Activated CD4-positive, alpha-beta memory T cell treated with anti-CD3 and anti-CD28 coated beads for 36 hours (primary cell): ENCODE measurements at regions of chr12 and their contacts with region 1.

Region 1: GRCh38 chr12:24705741-24706358 is 243.1 kb downstream of the BCAT1 start:
- DNase-seq: peak; percentile 38
- H3K4me3 Mint-ChIP-seq: peak overlapping the region; percentile 6
- H3K27ac Mint-ChIP-seq: peak overlapping the region; percentile 73
- H3K4me1 Mint-ChIP-seq: peaks cover 21% of the 10 kb centered on the region
- H3K27me3 Mint-ChIP-seq: peaks cover 3% of the 10 kb centered on the region

Region 2: DNA sequence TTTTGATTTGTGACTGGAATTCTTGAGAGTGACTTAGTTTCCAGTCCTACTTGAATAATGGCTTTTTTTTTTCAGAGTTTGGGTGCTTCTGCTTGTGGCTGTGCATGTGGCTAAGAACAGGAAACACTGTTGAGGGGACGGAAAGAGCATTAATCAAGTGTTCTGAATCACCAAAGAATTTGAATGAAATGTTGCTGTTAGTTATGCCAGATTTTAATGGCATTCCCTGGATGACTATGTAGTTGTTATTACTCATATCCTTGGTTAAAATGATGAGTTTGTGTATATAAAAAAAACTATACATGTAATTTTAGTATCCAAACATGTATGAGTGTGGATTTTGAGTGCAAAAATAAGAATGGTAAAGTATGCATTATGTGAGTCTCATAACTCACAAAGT is 104.9 kb before region 1 on chr12:
- CTCF ChIA-PET with region 1: no interaction called
- POLR2A ChIA-PET with region 1: no interaction called
- intact Hi-C with region 1: loop called (anchors 1 kb)
- DNase-seq: no peak
- H3K4me3 Mint-ChIP-seq: no peak overlapping the region
- H3K27ac Mint-ChIP-seq: peak overlapping the region; percentile 42
- H3K4me1 Mint-ChIP-seq: peaks cover 5% of the 10 kb centered on the region
- H3K27me3 Mint-ChIP-seq: peaks cover 5% of the 10 kb centered on the region

Region 3: GRCh38 chr12:24630446-24630845 is 75.4 kb before region 1 on chr12:
- CTCF ChIA-PET with region 1: no interaction called
- POLR2A ChIA-PET with region 1: no interaction called
- intact Hi-C with region 1: no loop called
- DNase-seq: no peak
- H3K4me3 Mint-ChIP-seq: no peak overlapping the region
- H3K27ac Mint-ChIP-seq: no peak overlapping the region
- H3K4me1 Mint-ChIP-seq: no peaks in the 10 kb centered on the region
- H3K27me3 Mint-ChIP-seq: no peaks in the 10 kb centered on the region

Region 4: DNA sequence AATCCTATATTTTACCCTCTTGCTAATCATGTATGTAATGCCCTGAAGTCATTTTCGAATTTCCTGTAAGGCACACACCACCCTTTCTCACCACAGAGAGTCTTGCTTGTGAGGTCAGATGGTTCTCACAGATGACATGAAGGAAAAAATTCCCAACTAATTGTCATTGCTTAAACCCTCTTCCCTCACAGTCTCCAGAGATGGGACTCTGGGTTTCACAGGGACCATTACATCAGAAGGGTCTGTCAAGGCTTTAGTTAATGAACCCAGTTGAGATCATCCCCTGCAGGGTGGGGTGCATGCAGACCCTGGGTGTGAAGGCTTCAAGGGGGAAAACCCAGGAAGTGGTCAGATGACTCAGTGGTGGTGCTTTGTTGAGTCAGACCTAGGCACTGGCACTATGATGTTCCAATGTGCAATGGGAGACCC is 13.5 kb after region 1 on chr12:
- CTCF ChIA-PET with region 1: interaction called, 4 read pairs
- POLR2A ChIA-PET with region 1: interaction called, 13 read pairs
- intact Hi-C with region 1: loop called (anchors 1 kb)
- DNase-seq: peak; percentile 79
- H3K4me3 Mint-ChIP-seq: no peak overlapping the region
- H3K27ac Mint-ChIP-seq: peak overlapping the region; percentile 84
- H3K4me1 Mint-ChIP-seq: peaks cover 31% of the 10 kb centered on the region
- H3K27me3 Mint-ChIP-seq: peaks cover 7% of the 10 kb centered on the region

Region 5: DNA sequence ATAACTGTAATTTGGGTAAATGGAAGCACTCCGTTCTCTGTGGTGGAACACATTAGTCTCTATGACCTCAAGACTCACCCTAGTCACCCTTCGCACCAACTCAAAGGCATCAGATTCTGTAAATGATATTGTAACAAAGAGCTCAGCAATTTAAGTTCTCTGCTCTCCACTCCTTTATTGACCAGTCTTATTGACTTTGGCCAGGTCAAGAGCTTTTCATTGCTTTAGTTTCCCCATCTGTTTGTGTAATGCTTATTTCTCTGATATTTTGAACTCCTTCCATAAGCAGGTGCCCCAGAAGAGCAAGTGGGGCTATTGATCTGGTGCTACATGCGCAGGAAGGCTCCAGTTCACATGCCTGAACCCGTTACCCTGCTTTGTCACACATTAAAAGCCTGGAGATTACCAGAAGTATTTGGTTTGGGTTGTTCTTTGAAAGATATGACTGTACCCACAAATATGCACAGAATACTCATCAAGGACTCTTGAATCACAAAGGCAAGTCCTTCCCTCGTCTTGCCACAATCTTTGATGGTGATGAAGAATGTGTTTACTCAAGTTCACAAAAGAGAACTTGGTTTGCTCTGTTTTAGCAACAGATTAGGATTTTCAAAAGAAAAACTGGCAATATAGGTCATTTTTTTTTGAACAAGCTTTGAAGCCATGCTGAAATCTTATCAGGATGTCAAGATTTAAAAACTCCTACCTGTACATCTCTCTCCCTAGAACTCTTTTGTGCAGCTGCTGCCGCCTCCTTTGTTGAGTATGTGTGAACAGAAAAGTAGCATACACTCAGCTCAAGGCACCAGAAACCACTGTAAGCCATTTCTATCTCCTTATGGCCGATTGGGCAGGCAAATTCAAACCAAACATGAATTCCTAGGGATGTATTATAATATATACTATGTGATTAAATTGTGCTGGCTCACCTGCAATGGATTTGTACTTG is 49.1 kb after region 1 on chr12:
- CTCF ChIA-PET with region 1: no interaction called
- POLR2A ChIA-PET with region 1: no interaction called
- intact Hi-C with region 1: loop called (anchors 2 kb)
- DNase-seq: peak; percentile 42
- H3K4me3 Mint-ChIP-seq: no peak overlapping the region
- H3K27ac Mint-ChIP-seq: peak overlapping the region; percentile 73
- H3K4me1 Mint-ChIP-seq: peaks cover 30% of the 10 kb centered on the region
- H3K27me3 Mint-ChIP-seq: peaks cover 7% of the 10 kb centered on the region